ENCODE measurements at regions of chr9 and their contacts with region 1.

Region 1: DNA sequence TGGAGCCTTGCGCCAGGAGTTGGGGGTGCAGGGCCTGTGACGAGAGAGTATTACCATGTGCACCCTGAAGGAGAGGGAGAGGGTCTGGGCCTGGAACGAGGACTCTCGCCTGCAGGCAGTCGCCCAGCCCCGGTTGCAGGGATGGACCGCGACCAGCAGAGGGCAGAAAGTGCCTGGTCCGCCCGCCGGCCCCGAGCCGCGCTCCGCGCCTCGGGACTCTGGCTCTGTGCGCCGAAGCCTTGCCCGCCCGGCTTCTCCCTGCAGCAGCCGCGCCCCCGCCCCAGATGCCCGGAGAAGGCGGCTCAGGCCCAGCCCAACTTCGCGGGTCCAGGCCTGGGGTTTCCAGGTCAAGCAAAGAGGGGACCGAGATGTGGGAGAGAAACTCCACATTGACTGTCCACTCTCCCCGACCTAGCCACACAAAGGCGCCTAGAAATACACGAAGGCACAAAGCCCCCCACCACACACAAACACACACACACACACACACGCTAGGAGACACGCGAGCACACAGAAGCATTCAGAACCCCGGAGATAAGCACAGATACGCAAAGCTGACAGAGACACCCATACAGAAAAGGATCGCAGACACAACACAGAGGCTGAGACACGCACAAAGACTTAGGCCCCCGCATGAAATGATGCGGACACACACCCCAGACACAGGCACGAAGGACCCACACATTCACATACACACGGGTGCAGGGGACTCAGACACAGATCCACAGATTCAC is 2.0 kb upstream of the LMX1B start:
- DNase-seq: peak; percentile 79
- H3K4me3 ChIP-seq: peak overlapping the region; percentile 64
- H3K27ac ChIP-seq: peak overlapping the region; percentile 23
- H3K4me1 ChIP-seq: peaks cover 51% of the 10 kb centered on the region
- H3K27me3 ChIP-seq: peaks cover 93% of the 10 kb centered on the region
- CTCF ChIP-seq: peak; percentile 89

Region 2: GRCh38 chr9:126682928-126683697 is 71.4 kb after region 1 on chr9:
- intact Hi-C with region 1: loop called (anchors 10 kb)
- DNase-seq: peak; percentile 51
- H3K4me3 ChIP-seq: peak overlapping the region; percentile 51
- H3K27ac ChIP-seq: no peak overlapping the region
- H3K4me1 ChIP-seq: peaks cover 14% of the 10 kb centered on the region
- H3K27me3 ChIP-seq: peaks cover 100% of the 10 kb centered on the region
- CTCF ChIP-seq: no peak

Measured in left ventricle myocardium inferior (tissue), 1 donor.